ENCODE measurements at regions of chr13 and their contacts with region 1.

Region 1: DNA sequence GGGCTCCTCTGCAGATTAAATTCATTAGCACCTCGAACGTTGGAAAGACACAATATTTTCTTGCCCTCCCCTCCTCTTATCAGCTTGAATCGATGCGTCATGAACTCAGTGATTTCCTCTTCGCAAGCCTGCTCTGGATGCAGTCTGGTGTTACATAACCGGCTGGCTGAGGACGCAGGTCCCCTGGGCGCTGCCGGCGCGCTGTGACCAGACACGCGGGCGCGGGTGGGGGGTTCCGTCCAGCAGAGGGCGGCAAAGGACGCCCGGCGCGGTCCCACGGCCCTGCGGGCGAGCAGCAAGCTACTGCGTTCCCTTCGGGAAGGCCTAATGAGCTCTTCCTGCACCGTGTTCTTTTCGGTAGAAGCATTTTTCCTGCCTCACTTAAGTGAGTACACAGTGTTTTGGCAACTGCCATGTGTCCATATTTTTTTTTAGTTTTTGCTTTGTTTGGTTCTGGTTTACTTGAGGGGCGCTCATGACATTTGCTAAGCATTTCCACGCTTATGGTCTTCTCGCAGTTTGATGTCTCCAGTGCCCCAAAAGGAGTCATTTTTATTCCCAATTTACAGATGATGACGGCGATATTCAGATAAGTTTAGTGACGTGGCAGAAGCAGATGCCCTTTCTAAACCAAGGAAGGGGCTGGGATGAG is 112.2 kb upstream of the MBNL2 start:
- DNase-seq: peak; percentile 93

Region 2: DNA sequence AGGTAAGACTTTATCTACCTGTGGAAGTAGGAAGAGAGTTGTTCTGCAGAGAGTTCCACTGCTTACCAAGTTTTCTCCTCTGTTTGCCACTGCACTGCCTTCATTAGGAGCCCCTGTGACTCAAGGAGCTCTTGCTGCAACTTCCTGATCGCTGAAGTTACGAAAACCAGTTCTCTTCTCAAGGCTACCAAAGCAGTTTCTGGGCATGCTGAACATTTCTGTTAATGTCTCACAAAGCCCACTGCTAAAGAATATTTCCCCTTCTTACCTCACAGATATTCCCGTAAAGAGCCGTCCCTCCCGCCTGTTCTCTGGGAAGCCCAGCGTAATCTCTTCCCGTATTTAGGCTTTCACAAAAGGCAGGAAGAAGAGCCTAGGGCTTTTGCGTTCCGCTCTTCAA is 33.1 kb before region 1 on chr13:
- intact Hi-C with region 1: no loop called
- DNase-seq: no peak

Region 3: DNA sequence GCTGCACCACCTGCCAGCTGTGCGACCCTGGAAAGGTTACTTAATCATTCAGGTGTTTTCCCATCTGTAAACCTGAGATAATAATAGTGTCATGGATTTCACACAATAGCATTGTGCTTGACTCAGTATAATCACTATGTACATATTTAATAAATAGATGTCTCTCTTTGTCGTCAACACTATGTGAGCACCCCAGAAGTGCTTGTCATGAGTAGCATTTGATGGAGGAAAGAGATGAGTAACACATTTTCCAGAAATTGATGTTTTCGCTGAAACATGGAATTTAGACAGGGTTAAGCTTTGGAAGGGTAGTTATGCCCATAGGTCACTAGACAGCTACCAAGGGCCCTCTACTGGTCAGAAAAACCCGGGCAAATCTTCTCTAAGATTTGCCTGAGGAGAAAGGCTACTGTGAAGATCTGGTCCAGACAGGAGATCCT is 102.7 kb after region 1 on chr13:
- intact Hi-C with region 1: loop called (anchors 1 kb)
- DNase-seq: no peak

Region 4: DNA sequence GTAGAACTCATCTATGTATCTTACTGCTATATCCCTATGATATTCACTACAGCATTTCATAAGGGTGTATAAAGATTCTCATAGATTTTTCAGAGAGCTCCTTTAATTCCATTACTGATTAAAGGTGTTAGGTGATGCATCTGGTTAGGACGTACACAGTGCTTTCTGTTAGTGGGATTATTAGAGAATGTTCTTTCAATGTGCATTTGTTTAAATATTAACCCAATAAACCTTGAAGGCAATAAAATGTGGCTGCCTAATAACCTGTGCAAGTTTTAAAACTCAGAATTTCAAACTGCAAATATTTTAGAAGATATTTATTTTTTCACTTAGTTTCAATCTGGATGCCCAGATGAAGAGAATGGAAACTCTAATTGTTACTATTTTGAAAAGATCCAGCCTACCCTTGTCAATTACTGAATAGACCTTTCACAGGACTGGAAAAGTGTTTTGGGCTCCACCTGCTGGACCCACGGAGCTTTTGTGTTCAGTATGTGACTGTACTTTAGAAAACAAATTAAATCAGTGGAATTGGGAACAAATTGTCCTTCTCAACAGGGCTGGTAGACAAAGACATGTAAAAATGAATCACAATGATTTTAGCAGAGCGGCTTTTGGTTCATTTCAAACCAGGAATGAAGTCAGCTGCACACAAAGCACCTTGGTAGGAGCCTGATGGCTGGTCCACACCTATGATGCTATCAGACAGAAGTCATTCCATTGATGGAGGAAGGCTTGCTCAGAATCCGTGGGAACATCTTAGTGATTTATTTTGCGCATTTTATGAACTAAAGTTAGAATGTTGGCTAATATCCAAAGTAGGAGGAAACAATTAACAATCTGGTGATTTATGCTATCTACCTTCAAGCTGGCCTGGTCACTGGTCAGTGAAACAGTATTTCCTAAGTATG is 234.6 kb after region 1 on chr13:
- intact Hi-C with region 1: loop called (anchors 1 kb)
- DNase-seq: no peak

Region 5: DNA sequence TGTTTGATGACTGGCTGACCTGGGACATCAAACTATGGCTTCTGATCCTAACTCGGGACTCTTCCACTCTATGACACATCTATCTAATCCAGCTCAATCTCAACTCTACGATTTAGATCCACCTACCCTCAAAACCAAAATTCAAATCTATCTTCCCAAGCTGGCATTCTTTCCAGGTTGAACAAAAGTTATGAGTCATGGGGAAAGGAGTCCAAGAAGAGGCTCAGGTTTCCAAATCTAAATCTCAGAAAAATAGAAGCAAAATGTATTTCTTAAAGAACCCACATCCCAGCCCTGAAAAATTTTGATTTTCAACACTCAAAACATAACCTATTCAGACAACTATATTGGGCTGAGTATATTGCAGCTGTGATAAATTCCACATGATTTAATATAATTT is 699.6 kb after region 1 on chr13:
- intact Hi-C with region 1: loop called (anchors 10 kb)
- DNase-seq: no peak